Activated B cell treated with CpG ODN at 0.5 μM for 24 hours (primary cell): ENCODE measurements at regions of chr4 and their contacts with region 1.

Region 1: DNA sequence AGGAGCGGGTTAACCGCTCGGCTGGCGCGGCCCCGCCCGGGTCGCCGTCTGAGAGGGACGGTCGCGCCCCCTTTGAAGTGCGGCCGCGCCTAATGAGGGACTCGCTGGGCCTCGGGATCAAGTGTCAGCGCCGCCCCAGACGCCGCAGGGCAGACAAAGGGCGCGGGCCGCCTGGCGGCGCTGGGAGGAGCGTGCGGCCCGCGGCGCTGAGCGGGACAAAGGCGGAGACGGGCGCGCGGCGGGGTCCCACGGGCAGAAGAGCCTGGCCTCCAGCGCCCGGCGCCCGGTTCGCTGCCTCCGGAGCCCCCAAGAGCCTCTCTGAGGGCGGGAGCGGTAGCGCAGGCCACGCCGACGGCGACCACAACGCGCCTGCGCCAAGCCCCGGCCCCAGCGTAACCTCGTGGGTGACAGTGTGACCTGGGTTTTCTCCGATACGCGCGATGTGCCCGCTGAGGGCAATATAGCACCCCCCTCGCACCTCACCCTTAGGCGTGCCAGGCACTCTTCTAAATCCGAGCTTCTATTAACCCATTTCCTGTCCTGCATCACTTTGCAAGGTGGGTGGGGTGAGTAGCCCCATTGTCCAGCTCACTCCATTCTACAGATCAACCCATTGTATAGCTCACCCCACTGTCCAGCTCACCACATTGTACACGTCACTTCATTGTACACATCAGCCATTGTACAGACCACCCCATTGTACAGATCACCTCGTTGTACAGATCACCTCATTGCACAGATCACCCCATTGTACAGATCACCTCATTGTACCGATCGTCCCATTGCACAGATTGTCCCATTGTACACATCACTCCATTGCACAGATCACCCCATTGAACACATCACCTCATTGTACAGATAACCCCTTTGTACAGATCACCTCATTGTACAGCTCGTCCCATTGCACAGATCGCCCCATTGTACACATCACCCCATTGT is 33.7 kb upstream of the STX18 start:
- DNase-seq: peak; percentile 59
- ATAC-seq: peak; percentile 89
- H3K4me3 Mint-ChIP-seq: peak overlapping the region; percentile 83
- H3K27ac Mint-ChIP-seq: peak overlapping the region; percentile 54
- H3K4me1 Mint-ChIP-seq: peaks cover 13% of the 10 kb centered on the region
- H3K27me3 Mint-ChIP-seq: no peaks in the 10 kb centered on the region
- CTCF ChIP-seq: no peak

Region 2: GRCh38 chr4:4524364-4524763 is 51.2 kb before region 1 on chr4:
- CTCF ChIA-PET with region 1: no interaction called
- POLR2A ChIA-PET with region 1: interaction called, 4 read pairs
- intact Hi-C with region 1: loop called (anchors 1 kb)
- DNase-seq: no peak
- ATAC-seq: peak; percentile 100
- H3K4me3 Mint-ChIP-seq: peak overlapping the region; percentile 62
- H3K27ac Mint-ChIP-seq: peak overlapping the region; percentile 75
- H3K4me1 Mint-ChIP-seq: peaks cover 31% of the 10 kb centered on the region
- H3K27me3 Mint-ChIP-seq: no peaks in the 10 kb centered on the region
- CTCF ChIP-seq: no peak

Region 3: DNA sequence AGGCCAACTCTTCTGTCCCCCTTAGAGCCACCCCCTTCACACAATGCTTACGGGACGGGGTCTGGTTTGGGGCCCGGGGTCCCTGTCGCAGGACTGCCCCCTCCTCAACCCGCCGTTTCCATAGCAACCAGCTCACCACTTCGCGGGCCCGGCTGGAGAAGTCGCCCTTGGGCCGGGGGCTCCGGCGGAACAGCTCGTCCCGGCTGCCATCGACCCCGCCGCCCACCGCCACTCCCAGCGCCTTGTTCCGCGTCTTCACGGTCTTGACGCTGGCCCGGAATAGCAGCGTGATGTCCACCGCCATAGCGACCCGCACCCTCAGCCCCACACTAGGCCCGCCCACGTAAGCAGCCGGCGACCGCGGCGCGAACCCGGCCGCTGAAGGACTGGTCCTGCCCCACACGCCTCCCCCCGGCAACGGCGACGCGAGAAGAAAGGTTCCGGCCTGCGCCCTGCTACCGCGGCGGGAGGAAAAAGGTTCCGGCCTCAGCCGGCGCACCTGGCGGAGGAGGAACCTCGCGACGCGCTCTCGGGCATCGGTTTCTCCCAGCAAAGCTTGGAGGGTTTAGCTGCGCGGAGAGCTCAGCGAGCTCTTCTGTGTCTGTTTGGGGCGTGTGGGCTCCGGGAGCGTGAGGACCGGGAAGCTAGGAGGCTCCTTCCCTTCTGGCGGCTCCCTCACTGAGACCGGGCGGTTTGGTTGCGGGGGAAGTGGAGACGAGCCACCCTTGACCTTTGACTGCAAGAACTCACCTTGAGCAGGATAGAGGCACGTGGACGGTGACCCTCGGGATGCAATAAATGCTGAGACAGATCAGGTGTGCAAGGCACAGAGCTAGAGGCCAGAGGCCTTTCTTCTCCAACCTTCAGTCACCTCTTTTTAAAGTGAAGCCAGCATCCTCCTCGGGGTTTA is 33.6 kb before region 1 on chr4 and contains the start of gene STX18:
- CTCF ChIA-PET with region 1: interaction called, 4 read pairs
- POLR2A ChIA-PET with region 1: interaction called, 32 read pairs
- intact Hi-C with region 1: loop called (anchors 1 kb)
- DNase-seq: peak; percentile 92
- ATAC-seq: peak; percentile 95
- H3K4me3 Mint-ChIP-seq: peak within 1 kb of the TSS; percentile 90
- H3K27ac Mint-ChIP-seq: peak within 1 kb of the TSS; percentile 88
- H3K4me1 Mint-ChIP-seq: peaks cover 42% of the 10 kb centered on the region
- H3K27me3 Mint-ChIP-seq: no peaks in the 10 kb centered on the region
- CTCF ChIP-seq: no peak
- total RNA-seq, gene STX18: 27.1 and 27.3 TPM in 2 replicates

Region 4: GRCh38 chr4:4595252-4595651 is 19.7 kb after region 1 on chr4:
- CTCF ChIA-PET with region 1: no interaction called
- POLR2A ChIA-PET with region 1: no interaction called
- intact Hi-C with region 1: no loop called
- DNase-seq: no peak
- ATAC-seq: no peak
- H3K4me3 Mint-ChIP-seq: no peak overlapping the region
- H3K27ac Mint-ChIP-seq: no peak overlapping the region
- H3K4me1 Mint-ChIP-seq: no peaks in the 10 kb centered on the region
- H3K27me3 Mint-ChIP-seq: no peaks in the 10 kb centered on the region
- CTCF ChIP-seq: no peak

Region 5: DNA sequence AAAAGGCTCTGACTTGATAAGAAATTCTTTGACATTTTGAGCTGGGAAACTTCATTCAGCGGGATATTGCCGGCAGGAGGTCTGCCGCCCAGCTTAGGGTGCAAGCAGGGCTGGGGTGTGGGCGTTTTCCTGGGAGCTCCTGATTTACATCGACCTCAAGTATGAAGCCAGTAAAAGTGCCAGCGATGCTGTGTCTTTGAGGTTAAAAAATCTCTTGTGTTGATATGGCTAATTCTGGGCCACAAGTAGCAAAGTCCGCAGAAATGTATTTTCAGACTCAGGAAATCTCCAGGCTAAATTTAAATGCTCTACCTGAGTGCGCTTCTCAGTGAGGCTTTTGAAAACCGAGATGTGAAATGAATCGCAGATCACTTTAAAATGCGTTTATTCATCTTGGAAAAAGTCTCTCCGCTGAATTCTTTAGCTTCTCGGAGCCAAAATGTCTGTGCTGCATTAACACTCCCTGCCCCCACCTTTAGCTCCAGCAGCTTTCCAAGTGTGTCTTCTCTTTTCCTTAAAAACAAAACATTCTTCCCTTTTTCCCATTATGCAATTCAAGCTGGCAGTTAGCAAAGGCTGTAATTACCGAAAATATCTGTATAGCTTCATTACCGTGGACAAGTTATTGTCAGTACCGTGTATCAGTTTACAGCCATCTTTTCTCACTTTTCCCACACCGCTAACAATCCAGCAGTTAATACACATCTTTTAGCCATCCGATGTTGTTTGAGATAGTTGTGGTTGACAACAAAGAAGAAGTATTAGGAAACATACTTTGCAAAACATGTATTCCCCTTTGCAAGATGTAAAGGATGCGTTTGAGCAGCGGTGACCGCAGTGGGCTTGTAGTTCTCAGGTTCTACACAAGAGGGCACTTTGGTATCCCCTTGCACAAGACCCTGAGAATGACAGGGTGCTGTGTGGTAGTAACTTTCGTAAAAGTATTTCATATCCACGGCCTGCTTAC is 102.3 kb after region 1 on chr4:
- CTCF ChIA-PET with region 1: no interaction called
- POLR2A ChIA-PET with region 1: interaction called, 12 read pairs
- intact Hi-C with region 1: no loop called
- DNase-seq: no peak
- ATAC-seq: no peak
- H3K4me3 Mint-ChIP-seq: no peak overlapping the region
- H3K27ac Mint-ChIP-seq: no peak overlapping the region
- H3K4me1 Mint-ChIP-seq: no peaks in the 10 kb centered on the region
- H3K27me3 Mint-ChIP-seq: no peaks in the 10 kb centered on the region
- CTCF ChIP-seq: no peak

Region 6: DNA sequence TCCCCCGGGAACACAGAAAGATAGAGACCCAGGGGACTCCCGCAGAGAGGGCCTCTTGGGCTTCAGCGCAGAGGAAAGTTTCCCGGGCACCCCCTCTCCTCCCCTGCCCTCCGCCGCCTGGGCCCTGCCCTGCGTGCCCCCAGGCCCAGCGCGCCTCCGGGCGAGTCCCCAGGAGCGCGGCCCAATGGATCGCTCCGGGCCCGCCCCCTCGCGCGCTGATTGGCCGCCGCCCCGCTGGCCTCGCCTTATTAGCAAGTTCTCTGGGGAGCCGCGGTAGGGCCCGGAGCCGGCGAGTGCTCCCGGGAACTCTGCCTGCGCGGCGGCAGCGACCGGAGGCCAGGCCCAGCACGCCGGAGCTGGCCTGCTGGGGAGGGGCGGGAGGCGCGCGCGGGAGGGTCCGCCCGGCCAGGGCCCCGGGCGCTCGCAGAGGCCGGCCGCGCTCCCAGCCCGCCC is 283.9 kb after region 1 on chr4 and contains the start of gene MSX1:
- CTCF ChIA-PET with region 1: no interaction called
- POLR2A ChIA-PET with region 1: interaction called, 3 read pairs
- intact Hi-C with region 1: loop called (anchors 10 kb)
- DNase-seq: peak; percentile 48
- ATAC-seq: peak; percentile 78
- H3K4me3 Mint-ChIP-seq: peak within 1 kb of the TSS; percentile 78
- H3K27ac Mint-ChIP-seq: no peak within 1 kb of the TSS
- H3K4me1 Mint-ChIP-seq: peaks cover 30% of the 10 kb centered on the region
- H3K27me3 Mint-ChIP-seq: peaks cover 59% of the 10 kb centered on the region
- CTCF ChIP-seq: no peak
- total RNA-seq, gene MSX1: not detected in 2 replicates